PC-3 (cell line): ENCODE measurements at regions of chr9 and their contacts with region 1.

Region 1: GRCh38 chr9:23123048-23123632 is 676.5 kb downstream of the DMRTA1 start:
- DNase-seq: peak; percentile 52
- ATAC-seq: no peak; the same call in 1 of the 2 replicates
- H3K4me3 ChIP-seq: no peak overlapping the region
- H3K27ac ChIP-seq: no peak overlapping the region
- H3K4me1 ChIP-seq: no peaks in the 10 kb centered on the region
- H3K27me3 ChIP-seq: no peaks in the 10 kb centered on the region
- CTCF ChIP-seq: peak; percentile 78

Region 2: GRCh38 chr9:22528485-22528884 is 594.7 kb before region 1 on chr9:
- CTCF ChIA-PET with region 1: no interaction called
- POLR2A ChIA-PET with region 1: no interaction called
- intact Hi-C with region 1: loop called (anchors 1 kb)
- DNase-seq: peak; percentile 53
- ATAC-seq: no peak
- H3K4me3 ChIP-seq: no peak overlapping the region
- H3K27ac ChIP-seq: no peak overlapping the region
- H3K4me1 ChIP-seq: peaks cover 13% of the 10 kb centered on the region
- H3K27me3 ChIP-seq: no peaks in the 10 kb centered on the region
- CTCF ChIP-seq: peak; percentile 70

Region 3: GRCh38 chr9:23322392-23322791 is 199.3 kb after region 1 on chr9:
- CTCF ChIA-PET with region 1: no interaction called
- POLR2A ChIA-PET with region 1: no interaction called
- intact Hi-C with region 1: loop called (anchors 1 kb)
- DNase-seq: peak; percentile 48
- ATAC-seq: peak; percentile 51
- H3K4me3 ChIP-seq: no peak overlapping the region
- H3K27ac ChIP-seq: no peak overlapping the region
- H3K4me1 ChIP-seq: no peaks in the 10 kb centered on the region
- H3K27me3 ChIP-seq: no peaks in the 10 kb centered on the region
- CTCF ChIP-seq: peak; percentile 66